HepG2 (cell line): ENCODE measurements at regions of chr14 and their contacts with region 1.

Region 1: GRCh38 chr14:49786315-49787110 is 18.6 kb downstream of the KLHDC2 start:
- DNase-seq: no peak
- ATAC-seq: no peak; the same call in 2 of the 3 replicates
- H3K4me3 ChIP-seq: no peak overlapping the region
- H3K27ac ChIP-seq: no peak overlapping the region
- H3K4me1 ChIP-seq: no peaks in the 10 kb centered on the region
- H3K27me3 ChIP-seq: no peaks in the 10 kb centered on the region
- CTCF ChIP-seq: no peak
- EP300 ChIP-seq: no peak
- POLR2A ChIP-seq: no peak
- RAD21 ChIP-seq: no peak

Region 2: DNA sequence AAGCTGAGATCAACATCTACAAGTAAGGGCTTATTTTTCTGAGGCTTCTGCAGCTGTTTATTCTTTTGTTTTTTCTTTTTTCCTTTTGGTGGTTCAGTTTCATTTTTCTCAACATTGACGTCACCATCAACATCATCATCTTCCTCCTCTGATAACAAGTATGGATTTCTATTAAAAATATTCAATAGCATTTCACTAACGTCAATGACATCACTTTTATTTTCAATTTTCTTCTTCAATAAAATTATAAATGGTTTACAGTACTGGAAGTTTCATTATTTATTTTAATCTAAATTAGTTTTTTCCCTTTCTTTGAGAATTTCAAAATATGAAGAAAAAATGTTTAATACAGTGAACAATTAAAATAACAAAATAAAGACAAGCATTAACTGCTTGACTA is 42.1 kb after region 1 on chr14:
- CTCF ChIA-PET with region 1: no interaction called
- POLR2A ChIA-PET with region 1: no interaction called
- in situ Hi-C with region 1: loop called (anchors 5 kb)
- intact Hi-C with region 1: no loop called
- DNase-seq: no peak
- ATAC-seq: no peak
- H3K4me3 ChIP-seq: no peak overlapping the region
- H3K27ac ChIP-seq: no peak overlapping the region
- H3K4me1 ChIP-seq: no peaks in the 10 kb centered on the region
- H3K27me3 ChIP-seq: no peaks in the 10 kb centered on the region
- CTCF ChIP-seq: no peak
- EP300 ChIP-seq: no peak
- POLR2A ChIP-seq: no peak
- RAD21 ChIP-seq: no peak